Endothelial cell of umbilical vein (primary cell): ENCODE measurements at regions of chr2 and their contacts with region 1.

Region 1: DNA sequence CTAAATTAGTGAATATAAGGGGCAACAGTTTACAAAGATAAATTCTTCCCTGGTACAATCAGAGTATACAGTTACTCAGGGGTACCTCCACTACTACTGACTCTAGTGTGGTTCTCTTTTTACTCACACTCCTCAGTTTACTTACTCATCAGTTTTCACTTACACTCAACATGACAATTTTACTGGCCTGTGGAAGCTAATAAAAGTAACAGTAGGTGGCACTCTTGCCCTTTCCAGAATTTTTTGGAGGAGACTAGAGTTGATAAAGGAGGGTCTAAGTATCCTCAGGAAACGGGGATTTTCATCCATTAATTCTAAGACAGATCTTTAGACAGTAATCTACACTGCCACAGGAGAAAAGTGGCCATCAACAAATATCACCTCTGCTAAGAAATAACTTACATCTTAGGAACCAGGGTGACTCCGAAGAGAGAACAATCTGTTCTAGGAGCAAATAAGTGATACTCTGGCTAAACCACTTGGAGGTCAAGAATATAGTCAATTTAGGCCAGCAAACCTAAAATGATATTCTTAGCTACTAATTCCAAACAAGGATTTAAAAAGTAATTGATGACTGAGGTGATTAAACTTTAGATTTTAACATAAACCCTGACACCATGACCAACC is 61.3 kb downstream of the ATL2 start:
- DNase-seq: peak; percentile 67
- H3K4me3 ChIP-seq: no peak overlapping the region
- H3K27ac ChIP-seq: no peak overlapping the region
- H3K4me1 ChIP-seq: no peaks in the 10 kb centered on the region
- H3K27me3 ChIP-seq: no peaks in the 10 kb centered on the region
- CTCF ChIP-seq: peak; percentile 38 to 41
- POLR2A ChIP-seq: no peak

Region 2: DNA sequence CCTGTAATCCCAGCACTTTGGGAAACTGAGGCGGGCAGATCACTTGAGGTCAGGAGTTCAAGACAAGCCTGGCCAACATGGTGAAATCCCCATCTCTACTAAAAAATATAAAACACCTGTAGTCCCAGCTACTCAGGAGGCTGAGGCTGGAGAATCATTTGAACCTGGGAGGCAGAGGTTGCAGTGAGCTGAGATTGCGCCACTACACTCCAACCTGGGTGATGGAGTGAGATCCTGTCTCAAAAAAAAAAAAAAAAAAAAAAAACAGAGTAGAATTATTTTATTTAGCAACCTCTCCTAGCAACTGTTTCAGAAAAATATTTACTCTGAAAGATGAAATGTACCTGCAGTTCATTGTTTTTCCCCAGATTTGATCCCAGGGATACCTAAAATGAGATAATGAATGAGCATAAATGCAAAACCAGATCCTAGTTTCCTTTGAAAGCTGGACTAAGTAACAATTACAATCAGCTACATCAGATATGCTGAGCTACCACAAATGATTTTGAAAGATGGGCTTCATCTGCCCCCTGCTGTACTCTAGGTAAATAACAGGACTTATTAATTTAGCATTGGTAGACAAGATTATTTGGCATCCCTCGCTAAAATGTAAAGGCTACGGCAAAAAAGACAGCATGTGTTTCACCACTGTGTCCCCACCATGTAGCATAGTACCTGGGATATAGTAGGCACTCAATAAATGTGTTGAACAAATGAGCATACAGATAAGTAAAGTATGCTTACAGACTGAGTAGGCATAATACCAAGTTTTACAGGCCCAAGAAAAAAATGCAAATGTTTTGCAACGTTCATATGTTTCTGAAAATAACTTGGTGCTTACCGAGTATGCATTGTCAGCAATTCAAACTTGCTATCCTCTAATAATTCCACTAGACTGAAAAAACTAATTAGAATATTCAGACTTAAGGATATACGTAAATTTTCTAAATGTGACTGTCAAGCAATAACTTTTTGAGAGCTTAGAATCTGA is 41.2 kb before region 1 on chr2:
- CTCF ChIA-PET with region 1: no interaction called
- POLR2A ChIA-PET with region 1: no interaction called
- dilution Hi-C with region 1: no loop called
- intact Hi-C with region 1: no loop called
- DNase-seq: peak; percentile 77
- H3K4me3 ChIP-seq: no peak overlapping the region
- H3K27ac ChIP-seq: no peak overlapping the region
- H3K4me1 ChIP-seq: no peaks in the 10 kb centered on the region
- H3K27me3 ChIP-seq: no peaks in the 10 kb centered on the region
- CTCF ChIP-seq: peak; percentile 34 to 39
- POLR2A ChIP-seq: no peak

Region 3: DNA sequence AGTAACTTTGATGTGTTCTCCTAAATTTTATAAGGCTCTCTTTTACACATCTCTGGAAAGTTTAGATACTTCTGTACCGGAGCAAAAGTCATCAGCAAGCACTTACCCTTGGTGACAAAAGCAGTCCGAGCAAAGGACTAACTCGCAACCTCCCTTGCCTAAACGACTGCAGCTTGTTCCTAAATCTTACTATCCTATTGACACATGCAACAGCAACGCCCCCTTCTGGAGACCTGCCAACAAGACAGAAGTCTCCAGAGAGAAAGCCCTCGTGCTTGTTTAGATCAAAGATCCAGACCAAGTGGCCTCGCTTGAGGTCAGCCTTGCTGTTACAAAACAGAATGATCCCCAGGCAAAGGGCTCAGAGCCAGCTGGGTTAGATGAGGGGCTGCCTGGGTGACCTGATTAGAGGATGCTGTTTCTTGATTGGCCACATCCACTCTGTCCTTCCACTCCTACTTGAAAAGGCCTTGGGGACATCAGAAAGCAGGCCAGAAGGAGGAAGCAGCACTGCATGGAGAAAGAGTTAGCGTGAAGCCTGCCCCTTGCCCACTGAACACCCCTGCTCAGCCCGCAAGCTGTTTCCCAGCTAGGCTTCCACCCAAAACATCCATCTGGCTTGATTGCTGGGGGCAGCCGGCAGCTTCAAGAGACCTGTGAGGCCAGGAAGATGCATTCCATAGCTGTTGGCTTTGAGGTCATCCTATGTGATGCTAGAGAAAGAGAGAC is 192.7 kb after region 1 on chr2:
- CTCF ChIA-PET with region 1: interaction called, 60 read pairs
- POLR2A ChIA-PET with region 1: no interaction called
- dilution Hi-C with region 1: no loop called
- intact Hi-C with region 1: loop called (anchors 1 kb)
- DNase-seq: peak; percentile 79
- H3K4me3 ChIP-seq: no peak overlapping the region
- H3K27ac ChIP-seq: no peak overlapping the region
- H3K4me1 ChIP-seq: peaks cover 3% of the 10 kb centered on the region
- H3K27me3 ChIP-seq: peaks cover 0 to 4% of the 10 kb centered on the region in 2 experiments
- CTCF ChIP-seq: peak; percentile 59 to 61
- POLR2A ChIP-seq: no peak

Region 4: DNA sequence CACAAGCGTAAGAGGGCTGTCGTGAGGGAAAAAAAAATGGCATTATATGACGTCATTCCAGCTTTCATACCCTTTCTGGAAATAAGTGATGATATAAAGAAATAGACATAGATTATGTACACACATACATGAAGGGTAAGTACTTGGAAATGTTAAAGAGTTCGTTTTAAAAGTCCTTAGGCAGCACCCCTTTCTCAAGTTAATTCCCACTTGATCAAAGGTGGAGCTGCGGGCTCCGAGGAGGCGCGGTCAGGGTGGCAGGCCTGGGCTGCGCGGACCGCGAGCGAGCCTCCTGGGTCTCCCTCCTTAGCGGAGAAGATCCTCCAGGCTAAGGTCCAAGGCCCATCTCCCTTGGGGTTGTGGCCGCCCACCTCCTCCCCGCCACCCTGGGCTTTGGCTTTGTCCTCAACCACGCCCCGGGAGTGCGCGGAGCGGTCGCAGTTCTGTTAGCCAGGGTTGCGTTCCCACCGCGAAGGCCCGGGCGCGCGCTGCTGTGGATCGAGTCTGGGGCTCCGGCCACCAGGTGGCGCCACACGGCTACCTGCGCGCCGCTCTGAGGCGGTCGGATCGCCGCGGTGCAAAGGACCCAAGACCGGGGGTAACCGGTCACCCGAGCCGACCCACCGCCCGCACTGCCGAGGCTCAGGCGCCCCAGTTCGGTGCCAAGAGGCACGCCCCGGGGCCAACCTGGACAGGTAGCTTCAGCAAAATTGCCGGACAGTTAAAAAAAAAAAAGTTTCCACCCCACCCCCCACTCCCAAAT is 220.1 kb after region 1 on chr2:
- CTCF ChIA-PET with region 1: interaction called, 12 read pairs
- POLR2A ChIA-PET with region 1: no interaction called
- dilution Hi-C with region 1: no loop called
- intact Hi-C with region 1: loop called (anchors 2 kb)
- DNase-seq: peak; percentile 75
- H3K4me3 ChIP-seq: peak overlapping the region; percentile 34 to 57 (median 52)
- H3K27ac ChIP-seq: no peak overlapping the region
- H3K4me1 ChIP-seq: no peaks in the 10 kb centered on the region
- H3K27me3 ChIP-seq: no peaks in the 10 kb centered on the region
- CTCF ChIP-seq: peak; percentile 94 to 96
- POLR2A ChIP-seq: no peak

Region 5: GRCh38 chr2:38740851-38741731 is 425.3 kb after region 1 on chr2:
- CTCF ChIA-PET with region 1: no interaction called
- POLR2A ChIA-PET with region 1: no interaction called
- dilution Hi-C with region 1: no loop called
- intact Hi-C with region 1: loop called (anchors 5 kb)
- DNase-seq: peak; percentile 62
- H3K4me3 ChIP-seq: no peak overlapping the region
- H3K27ac ChIP-seq: no peak overlapping the region
- H3K4me1 ChIP-seq: no peaks in the 10 kb centered on the region
- H3K27me3 ChIP-seq: no peaks in the 10 kb centered on the region
- CTCF ChIP-seq: peak; percentile 12 to 29
- POLR2A ChIP-seq: peak; percentile 13